Lower leg skin (tissue), 4 donors: ENCODE measurements at regions of chrX and their contacts with region 1.

Region 1: DNA sequence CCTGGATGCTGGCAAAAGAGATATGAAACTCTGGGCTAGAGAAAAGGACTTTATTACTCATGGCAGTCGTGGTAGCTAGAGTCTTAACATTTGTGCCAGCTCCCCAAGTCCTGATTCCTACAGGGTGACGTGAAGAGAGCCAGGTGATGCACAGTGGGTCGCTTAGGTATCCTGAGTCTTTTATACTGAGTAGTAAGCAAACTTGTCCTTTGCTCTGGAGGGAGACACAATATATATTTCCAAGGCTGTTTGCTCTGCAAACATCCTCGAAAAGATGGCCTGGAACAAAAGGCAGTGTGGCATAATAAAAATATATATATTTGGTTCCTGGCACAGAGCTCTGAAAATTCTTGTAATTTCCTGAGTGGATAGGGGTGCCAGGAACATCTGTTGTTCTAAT is 23.0 kb downstream of the ZNF81 start:
- DNase-seq: no peak
- H3K4me3 ChIP-seq: no peak overlapping the region
- CTCF ChIP-seq: no peak
- POLR2A ChIP-seq: no peak

Region 2: DNA sequence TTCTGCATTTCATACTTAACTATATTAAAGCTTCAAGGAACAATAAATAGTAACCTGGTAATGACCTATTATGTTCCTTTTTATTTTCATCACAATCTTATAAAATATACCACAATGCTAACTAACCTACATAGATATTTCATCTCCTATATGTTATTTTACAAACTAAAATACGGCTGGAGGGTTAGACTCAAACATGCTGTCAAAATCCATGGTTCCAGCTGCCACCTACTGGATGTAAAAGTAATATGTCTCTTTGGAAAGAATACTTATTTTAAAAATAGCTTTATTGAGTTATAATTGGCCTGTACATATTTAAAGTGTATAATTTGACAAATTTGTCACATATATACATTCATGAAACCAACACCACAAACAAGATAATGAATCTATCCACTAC is 766.4 kb before region 1 on chrX:
- intact Hi-C with region 1: no loop called
- DNase-seq: no peak
- H3K4me3 ChIP-seq: no peak overlapping the region
- CTCF ChIP-seq: no peak
- POLR2A ChIP-seq: no peak

Region 3: DNA sequence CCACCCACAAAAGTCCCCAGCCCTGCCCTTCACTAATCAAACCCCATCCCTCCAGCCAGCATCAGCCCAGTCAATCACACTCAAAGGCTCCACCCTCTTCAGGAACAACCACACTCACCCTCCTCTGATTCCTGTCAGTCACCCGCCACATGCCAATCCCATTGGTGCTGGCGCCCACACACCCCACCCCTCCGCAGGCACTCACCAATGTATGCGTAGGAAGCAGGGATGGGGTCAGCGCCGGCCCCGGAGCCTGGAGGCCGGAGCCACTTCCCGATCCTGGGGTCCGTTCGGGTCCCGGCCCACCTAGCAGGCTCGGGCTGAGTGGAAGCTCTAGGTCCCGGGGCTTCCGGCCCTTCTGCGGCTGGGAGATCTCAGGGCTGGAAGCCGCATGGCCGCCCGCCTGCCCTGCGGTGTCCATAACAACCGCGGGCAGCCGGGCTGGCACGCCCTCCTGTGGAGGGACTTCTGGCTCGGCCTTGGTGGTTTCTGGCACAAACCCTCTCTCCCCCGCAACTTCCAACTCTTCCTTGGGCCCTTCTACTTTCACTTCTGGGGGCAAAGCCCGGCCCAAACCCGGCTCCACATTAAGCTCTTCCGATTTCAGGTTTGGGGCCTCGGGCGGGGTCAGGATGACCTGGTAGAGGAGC is 222.0 kb before region 1 on chrX:
- intact Hi-C with region 1: loop called (anchors 5 kb)
- DNase-seq: no peak
- H3K4me3 ChIP-seq: no peak overlapping the region
- CTCF ChIP-seq: no peak
- POLR2A ChIP-seq: no peak

Region 4: DNA sequence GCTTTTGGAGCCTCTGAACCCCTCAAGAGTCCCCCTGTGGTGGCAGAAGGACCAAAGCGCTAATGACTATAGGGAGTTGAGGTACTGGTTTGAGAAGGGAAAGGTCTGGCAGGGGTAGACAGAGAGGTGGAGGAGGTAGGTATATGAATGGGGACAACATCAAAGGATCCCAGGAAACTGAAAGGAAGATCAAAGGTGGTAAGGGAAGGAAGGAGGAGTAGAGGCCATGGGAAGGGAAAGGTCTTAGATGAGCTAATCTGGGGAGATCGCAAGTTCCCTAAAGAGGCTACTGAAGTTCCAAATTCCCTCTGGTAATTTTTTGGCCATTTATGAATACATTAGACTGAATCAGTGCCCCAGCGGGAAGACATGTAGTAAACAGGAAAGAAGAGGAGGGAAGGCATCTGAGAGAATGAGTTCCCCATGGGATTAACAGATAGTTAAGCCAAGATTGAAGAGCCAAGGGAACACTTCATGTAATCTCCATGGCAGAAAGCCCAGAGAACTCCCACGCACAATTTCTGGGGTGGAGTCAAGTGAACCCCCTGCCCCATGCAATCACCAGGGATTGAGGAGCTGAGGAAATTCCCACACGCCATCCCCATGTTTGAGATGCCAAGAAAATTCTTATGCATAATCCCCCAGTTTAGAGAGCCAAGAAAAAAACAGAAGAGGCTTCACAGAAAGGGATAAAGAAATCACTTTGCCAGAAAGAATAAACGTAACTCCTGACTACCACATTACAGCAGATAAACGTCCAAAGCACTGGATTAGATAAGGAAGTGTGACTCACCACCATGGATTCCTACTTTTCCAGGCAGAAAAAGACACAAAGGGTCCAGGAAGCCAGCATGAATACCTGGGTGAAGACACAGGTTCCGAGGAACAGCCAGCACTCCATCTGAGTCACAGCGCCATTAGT is 186.0 kb after region 1 on chrX:
- intact Hi-C with region 1: no loop called
- DNase-seq: no peak
- H3K4me3 ChIP-seq: no peak overlapping the region
- CTCF ChIP-seq: no peak
- POLR2A ChIP-seq: no peak